ENCODE measurements at regions of chr7 and their contacts with region 1.

Region 1: GRCh38 chr7:95916573-95917297 is 144.4 kb downstream of the DYNC1I1 start:
- DNase-seq: peak; percentile 45 to 60
- ATAC-seq: peak; percentile 76 to 94; a peak in 5 of 6 replicates
- H3K4me3 ChIP-seq: no peak overlapping the region
- H3K27ac ChIP-seq: no peak overlapping the region
- H3K4me1 ChIP-seq: no peaks in the 10 kb centered on the region
- CTCF ChIP-seq: peak; percentile 95
- EP300 ChIP-seq: no peak
- POLR2A ChIP-seq: no peak
- RAD21 ChIP-seq: peak; percentile 91

Region 2: GRCh38 chr7:95905165-95905564 is 11.6 kb before region 1 on chr7:
- CTCF ChIA-PET with region 1: interaction called, 22 read pairs
- POLR2A ChIA-PET with region 1: no interaction called
- DNase-seq: no peak
- ATAC-seq: no peak
- H3K4me3 ChIP-seq: no peak overlapping the region
- H3K27ac ChIP-seq: no peak overlapping the region
- H3K4me1 ChIP-seq: no peaks in the 10 kb centered on the region
- CTCF ChIP-seq: no peak
- EP300 ChIP-seq: no peak
- POLR2A ChIP-seq: no peak
- RAD21 ChIP-seq: no peak

Region 3: DNA sequence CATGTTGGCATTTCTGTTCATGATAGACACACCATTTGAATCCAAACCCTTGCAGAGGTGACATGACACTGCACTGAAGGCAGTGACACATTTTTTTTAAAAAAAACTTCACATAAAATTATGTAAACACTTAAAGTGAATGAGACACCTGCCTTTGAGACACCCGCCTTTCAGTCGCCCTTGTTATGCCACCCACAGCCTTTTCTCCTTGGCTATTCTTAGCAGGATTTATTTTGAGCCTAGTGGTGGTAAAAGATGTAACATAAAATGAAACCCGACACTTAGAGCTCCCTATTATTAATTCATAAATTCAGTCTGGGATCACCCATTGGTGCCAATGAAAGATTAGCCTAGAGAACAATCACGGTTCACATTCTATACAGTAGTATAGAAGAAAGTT is 16.9 kb after region 1 on chr7:
- CTCF ChIA-PET with region 1: interaction called, 21 read pairs
- POLR2A ChIA-PET with region 1: no interaction called
- DNase-seq: no peak
- ATAC-seq: no peak
- H3K4me3 ChIP-seq: no peak overlapping the region
- H3K27ac ChIP-seq: no peak overlapping the region
- H3K4me1 ChIP-seq: no peaks in the 10 kb centered on the region
- CTCF ChIP-seq: no peak
- EP300 ChIP-seq: no peak
- POLR2A ChIP-seq: no peak
- RAD21 ChIP-seq: no peak

Region 4: GRCh38 chr7:96102096-96102811 is 185.5 kb after region 1 on chr7:
- CTCF ChIA-PET with region 1: no interaction called
- POLR2A ChIA-PET with region 1: no interaction called
- DNase-seq: no peak
- ATAC-seq: no peak
- H3K4me3 ChIP-seq: no peak overlapping the region
- H3K27ac ChIP-seq: no peak overlapping the region
- H3K4me1 ChIP-seq: no peaks in the 10 kb centered on the region
- CTCF ChIP-seq: no peak
- EP300 ChIP-seq: no peak
- POLR2A ChIP-seq: no peak
- RAD21 ChIP-seq: no peak

Region 5: DNA sequence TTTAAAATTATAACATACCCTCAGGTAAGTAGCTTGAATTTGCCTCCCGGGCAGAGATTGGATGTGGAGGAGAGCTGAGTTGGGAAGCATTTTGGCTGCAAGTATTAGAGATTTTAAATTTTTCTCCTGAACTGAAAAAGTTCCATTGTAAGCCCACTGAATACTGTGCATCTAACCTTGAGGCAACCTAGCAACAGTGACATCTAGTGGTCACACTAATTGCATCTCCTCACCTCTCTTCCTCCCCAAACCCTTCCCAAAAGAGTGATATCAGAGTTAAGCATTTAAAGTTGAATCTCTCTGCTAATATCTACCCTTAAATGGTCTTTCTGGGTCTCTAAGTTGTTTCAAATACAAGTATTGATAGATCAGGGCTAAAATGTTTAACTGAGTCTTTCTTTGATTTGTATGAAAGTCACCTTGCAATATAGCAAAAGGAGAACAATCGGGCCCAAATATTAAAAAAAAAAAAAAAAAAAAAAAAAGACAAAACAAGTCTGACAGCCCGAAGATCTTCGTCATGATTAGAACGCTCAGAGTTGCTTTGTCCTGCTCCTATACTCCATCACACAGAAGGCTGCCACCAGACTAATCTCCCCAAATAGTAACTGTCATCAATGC is 1148.3 kb after region 1 on chr7:
- CTCF ChIA-PET with region 1: interaction called, 19 read pairs
- POLR2A ChIA-PET with region 1: no interaction called
- DNase-seq: peak; percentile 37 to 59
- ATAC-seq: peak; percentile 91 to 98
- H3K4me3 ChIP-seq: no peak overlapping the region
- H3K27ac ChIP-seq: no peak overlapping the region
- H3K4me1 ChIP-seq: no peaks in the 10 kb centered on the region
- CTCF ChIP-seq: peak; percentile 76
- EP300 ChIP-seq: no peak
- POLR2A ChIP-seq: no peak
- RAD21 ChIP-seq: peak; percentile 39 to 44; a peak in 3 of 5 replicates

Region 6: GRCh38 chr7:97845622-97846203 is 1929.0 kb after region 1 on chr7:
- CTCF ChIA-PET with region 1: interaction called, 10 read pairs
- POLR2A ChIA-PET with region 1: no interaction called
- DNase-seq: peak; percentile 16 to 24
- ATAC-seq: peak in 1 of 2 experiments; percentile 64; a peak in 3 of 6 replicates
- H3K4me3 ChIP-seq: no peak overlapping the region
- H3K27ac ChIP-seq: no peak overlapping the region
- H3K4me1 ChIP-seq: no peaks in the 10 kb centered on the region
- CTCF ChIP-seq: peak; percentile 74
- EP300 ChIP-seq: no peak
- POLR2A ChIP-seq: no peak
- RAD21 ChIP-seq: peak; percentile 60 to 69